HAP-1 (cell line): ENCODE measurements at regions of chr3 and their contacts with region 1.

Region 1: GRCh38 chr3:42780892-42781700 is 8.0 kb upstream of the CCDC13 start:
- DNase-seq: peak; percentile 50 to 57
- H3K4me3 ChIP-seq: no peak overlapping the region
- H3K4me1 ChIP-seq: no peaks in the 10 kb centered on the region
- H3K27me3 ChIP-seq: no peaks in the 10 kb centered on the region

Region 2: GRCh38 chr3:42839616-42840015 is 58.5 kb after region 1 on chr3:
- in situ Hi-C with region 1: loop called (anchors 5 kb)
- DNase-seq: peak; percentile 58 to 63
- H3K4me3 ChIP-seq: no peak overlapping the region
- H3K4me1 ChIP-seq: no peaks in the 10 kb centered on the region
- H3K27me3 ChIP-seq: peaks cover 26% of the 10 kb centered on the region

Region 3: DNA sequence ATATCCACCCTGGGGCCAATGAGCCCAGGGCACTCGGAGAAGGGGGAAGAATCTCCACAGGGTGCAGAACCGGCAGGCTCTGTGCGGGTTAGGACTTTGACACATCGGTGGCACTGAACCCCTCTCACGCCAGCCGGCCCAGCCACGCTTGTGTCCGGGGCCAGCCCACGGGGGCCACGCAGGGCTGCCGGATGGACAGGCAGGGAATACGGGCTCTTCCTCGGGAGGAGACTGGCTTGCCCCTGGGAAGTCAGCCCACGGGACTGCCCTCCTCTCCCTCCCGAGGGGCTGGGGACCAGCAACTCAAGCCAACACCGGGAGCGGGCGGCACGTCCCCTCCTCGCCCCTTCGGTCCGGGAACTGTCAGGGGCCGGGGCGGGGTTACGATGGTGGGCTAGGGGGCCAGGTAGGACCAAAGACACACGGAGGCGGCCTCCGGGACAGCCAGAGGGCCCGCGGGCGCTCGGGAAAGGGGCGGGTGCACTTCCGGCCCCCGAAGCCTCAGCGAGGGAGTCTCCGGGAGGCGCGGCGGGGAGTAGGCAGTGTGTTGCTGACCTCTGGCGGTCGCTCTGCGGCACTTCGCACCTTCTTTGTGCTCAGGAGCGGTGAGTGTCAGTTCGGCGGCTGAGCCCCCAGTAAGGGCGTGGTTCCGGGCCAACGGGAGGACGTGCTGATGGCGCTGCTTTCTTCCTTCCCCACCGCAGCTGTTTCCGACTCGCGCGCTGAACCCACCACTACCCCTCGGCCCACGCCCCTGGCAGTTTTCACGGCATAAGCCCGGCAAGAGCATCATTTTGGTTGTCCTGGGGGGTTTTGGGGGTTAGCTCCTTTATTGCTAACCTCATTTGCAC is 99.7 kb after region 1 on chr3:
- in situ Hi-C with region 1: loop called (anchors 10 kb)
- DNase-seq: peak; percentile 86 to 92
- H3K4me3 ChIP-seq: peak overlapping the region; percentile 43
- H3K4me1 ChIP-seq: peaks cover 6% of the 10 kb centered on the region
- H3K27me3 ChIP-seq: peaks cover 10% of the 10 kb centered on the region; the same call in 1 of the 2 replicates